PC-3 (cell line): ENCODE measurements at regions of chr5 and their contacts with region 1.

Region 1: DNA sequence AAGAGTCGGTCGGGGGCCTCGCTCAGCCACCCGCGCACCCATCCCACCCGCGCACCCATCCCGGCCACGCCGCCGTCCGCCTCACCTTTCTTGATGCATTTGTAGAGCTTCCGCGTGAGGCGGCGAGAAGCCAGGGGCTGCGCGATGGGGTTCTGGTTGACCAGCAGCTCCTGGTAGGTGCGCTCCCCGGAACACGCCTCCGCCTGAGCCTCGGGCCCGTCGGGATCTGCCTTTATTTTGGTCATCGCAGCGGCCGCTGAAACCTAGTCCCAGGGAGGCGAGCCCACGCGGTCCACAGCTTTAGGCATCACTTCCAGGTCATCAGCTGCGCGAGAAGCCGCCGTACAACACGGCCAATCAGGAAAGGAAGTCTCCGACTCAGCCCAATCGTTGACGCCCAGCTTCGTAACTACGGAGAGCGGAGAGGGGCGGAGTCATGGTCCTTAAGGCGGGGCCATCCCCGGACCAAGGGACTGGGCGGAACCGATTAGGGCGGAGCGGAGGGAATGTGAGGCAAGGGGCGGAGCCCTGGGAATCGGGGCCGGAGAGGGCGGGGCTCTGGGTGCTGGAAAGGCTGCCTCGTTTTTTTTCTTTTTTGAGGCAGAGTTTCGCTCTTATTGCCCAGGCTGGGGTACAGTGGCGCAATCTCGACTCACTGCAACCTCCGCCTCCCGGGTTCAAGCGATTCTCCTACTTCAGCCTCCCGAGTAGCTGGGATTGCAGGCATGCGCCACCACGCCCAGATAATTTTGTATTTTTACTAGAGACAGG is at the start of gene NHP2:
- DNase-seq: peak; percentile 99
- ATAC-seq: peak; percentile 97
- H3K4me3 ChIP-seq: peak within 1 kb of the TSS; percentile 92
- H3K27ac ChIP-seq: peak within 1 kb of the TSS; percentile 12; the same call in 1 of the 2 replicates
- H3K4me1 ChIP-seq: peaks cover 7% of the 10 kb centered on the region; the same call in 1 of the 2 replicates
- H3K27me3 ChIP-seq: no peaks in the 10 kb centered on the region
- CTCF ChIP-seq: no peak
- total RNA-seq, gene NHP2: 649 TPM in 2 replicates

Region 2: GRCh38 chr5:178083943-178084342 is 69.8 kb before region 1 on chr5:
- CTCF ChIA-PET with region 1: no interaction called
- POLR2A ChIA-PET with region 1: no interaction called
- intact Hi-C with region 1: no loop called
- DNase-seq: peak; percentile 73
- ATAC-seq: no peak
- H3K4me3 ChIP-seq: no peak overlapping the region
- H3K27ac ChIP-seq: no peak overlapping the region
- H3K4me1 ChIP-seq: peaks cover 16% of the 10 kb centered on the region
- H3K27me3 ChIP-seq: peaks cover 15% of the 10 kb centered on the region
- CTCF ChIP-seq: no peak

Region 3: GRCh38 chr5:178130604-178131485 is 22.9 kb before region 1 on chr5 and contains the start of gene RMND5B:
- CTCF ChIA-PET with region 1: no interaction called
- POLR2A ChIA-PET with region 1: no interaction called
- intact Hi-C with region 1: loop called (anchors 1 kb)
- DNase-seq: peak; percentile 87
- ATAC-seq: peak; percentile 88
- H3K4me3 ChIP-seq: peak within 1 kb of the TSS; percentile 100
- H3K27ac ChIP-seq: peak within 1 kb of the TSS; percentile 43
- H3K4me1 ChIP-seq: peaks cover 16% of the 10 kb centered on the region; the same call in 1 of the 2 replicates
- H3K27me3 ChIP-seq: no peaks in the 10 kb centered on the region
- CTCF ChIP-seq: no peak
- total RNA-seq, gene RMND5B: 33.2 and 36.4 TPM in 2 replicates

Region 4: GRCh38 chr5:178204182-178204894 is 50.6 kb after region 1 on chr5 and contains the start of gene HNRNPAB:
- CTCF ChIA-PET with region 1: no interaction called
- POLR2A ChIA-PET with region 1: interaction called, 3 read pairs
- intact Hi-C with region 1: loop called (anchors 5 kb)
- DNase-seq: peak; percentile 96
- ATAC-seq: peak; percentile 74
- H3K4me3 ChIP-seq: peak within 1 kb of the TSS; percentile 92
- H3K27ac ChIP-seq: peak within 1 kb of the TSS; percentile 21; the same call in 1 of the 2 replicates
- H3K4me1 ChIP-seq: peaks cover 31% of the 10 kb centered on the region
- H3K27me3 ChIP-seq: no peaks in the 10 kb centered on the region
- CTCF ChIP-seq: no peak
- total RNA-seq, gene HNRNPAB: 231 and 369 TPM in 2 replicates